Heart left ventricle (tissue), 16 donors: ENCODE measurements at regions of chr3 and their contacts with region 1.

Region 1: DNA sequence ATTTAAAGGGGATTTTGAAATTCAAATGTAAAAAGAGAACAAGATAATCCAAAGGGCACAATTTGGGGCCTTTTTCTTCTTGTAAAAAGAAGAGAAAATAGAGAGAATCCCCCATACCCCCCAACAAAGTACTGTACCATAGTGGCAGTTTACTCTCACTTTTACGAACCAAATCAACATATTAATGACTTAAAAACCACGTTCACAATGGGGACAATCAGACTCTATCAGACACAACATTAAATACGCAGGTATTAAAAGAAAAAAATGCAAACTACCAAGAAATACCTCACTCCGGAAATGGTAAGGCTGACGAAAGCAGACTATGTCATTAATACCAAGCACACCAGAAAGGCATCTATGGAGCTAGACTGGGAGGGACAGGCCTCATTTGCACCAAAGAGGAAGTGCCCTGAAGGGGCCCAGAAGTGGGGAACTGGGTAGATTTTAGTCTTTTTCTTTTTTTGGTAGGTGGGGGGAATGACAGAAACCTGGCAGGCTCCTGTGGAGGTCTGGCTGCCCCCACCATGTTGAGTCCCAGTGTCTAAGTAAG is 134.3 kb downstream of the TIGIT start:
- DNase-seq: no peak
- ATAC-seq: no peak
- H3K4me3 ChIP-seq: no peak overlapping the region
- H3K27ac ChIP-seq: no peak overlapping the region
- H3K4me1 ChIP-seq: peaks cover 0 to 16% (median 7%) of the 10 kb centered on the region in 12 donors
- H3K27me3 ChIP-seq: no peaks in the 10 kb centered on the region
- CTCF ChIP-seq: no peak
- POLR2A ChIP-seq: no peak

Region 2: GRCh38 chr3:114112696-114113095 is 315.4 kb before region 1 on chr3:
- intact Hi-C with region 1: no loop called
- DNase-seq: no peak
- ATAC-seq: peak in 1 of 4 donors; percentile 20
- H3K4me3 ChIP-seq: no peak overlapping the region
- H3K27ac ChIP-seq: no peak overlapping the region
- H3K4me1 ChIP-seq: peaks cover 0 to 24% (median 0%) of the 10 kb centered on the region in 12 donors
- H3K27me3 ChIP-seq: no peaks in the 10 kb centered on the region
- CTCF ChIP-seq: no peak
- POLR2A ChIP-seq: no peak

Region 3: DNA sequence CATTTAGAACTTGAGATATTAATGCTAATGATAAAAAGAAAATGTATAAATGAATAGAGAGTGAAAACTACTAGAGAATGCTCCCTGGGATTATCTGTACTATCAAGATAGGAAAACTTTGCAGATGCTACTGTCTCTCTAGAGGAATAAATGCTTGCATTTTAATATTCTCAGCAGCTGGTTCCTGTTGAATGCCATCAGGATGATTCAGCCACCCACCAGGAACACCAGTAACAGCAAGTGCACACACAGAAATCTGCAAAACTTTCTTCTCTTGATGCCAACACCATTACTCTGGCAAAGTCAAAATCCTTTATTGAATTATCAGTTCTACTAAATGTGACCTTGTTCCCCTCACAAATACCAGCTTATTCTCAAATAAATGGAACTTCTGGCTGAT is 14.1 kb after region 1 on chr3:
- intact Hi-C with region 1: loop called in 1 of 10 experiments (anchors 2 kb)
- DNase-seq: no peak
- ATAC-seq: peak in 2 of 4 donors; percentile 23 to 50
- H3K4me3 ChIP-seq: no peak overlapping the region
- H3K27ac ChIP-seq: no peak overlapping the region
- H3K4me1 ChIP-seq: peaks cover 5 to 78% (median 57%) of the 10 kb centered on the region in 12 donors
- H3K27me3 ChIP-seq: no peaks in the 10 kb centered on the region
- CTCF ChIP-seq: no peak
- POLR2A ChIP-seq: no peak

Region 4: DNA sequence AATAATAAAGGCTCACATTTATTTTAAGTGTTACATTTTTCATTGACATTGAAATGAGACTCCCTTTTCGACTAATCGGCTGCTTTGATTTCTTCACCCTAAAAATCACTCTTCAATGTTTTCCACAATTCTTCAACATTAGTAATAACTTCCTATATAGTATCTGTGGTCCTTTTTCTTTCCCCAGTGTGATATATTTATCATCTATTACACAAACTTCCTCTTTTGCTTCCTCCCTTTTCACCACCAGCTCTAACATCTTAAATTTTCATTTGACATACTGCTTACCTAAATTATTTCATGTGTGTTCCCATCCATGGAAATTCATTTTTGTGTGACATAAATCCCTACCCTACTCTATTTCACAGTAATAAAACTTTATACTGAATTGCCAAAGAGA is 110.1 kb after region 1 on chr3:
- intact Hi-C with region 1: no loop called
- DNase-seq: no peak
- ATAC-seq: no peak
- H3K4me3 ChIP-seq: no peak overlapping the region
- H3K27ac ChIP-seq: no peak overlapping the region
- H3K4me1 ChIP-seq: peaks cover 0 to 14% (median 2%) of the 10 kb centered on the region in 12 donors
- H3K27me3 ChIP-seq: no peaks in the 10 kb centered on the region
- CTCF ChIP-seq: no peak
- POLR2A ChIP-seq: no peak

Region 5: GRCh38 chr3:114597013-114597412 is 168.9 kb after region 1 on chr3:
- intact Hi-C with region 1: loop called in 1 of 10 experiments (anchors 10 kb)
- DNase-seq: no peak
- ATAC-seq: peak in 1 of 4 donors; percentile 30
- H3K4me3 ChIP-seq: no peak overlapping the region
- H3K27ac ChIP-seq: peak overlapping the region in 1 of 12 donors; percentile 28
- H3K4me1 ChIP-seq: peaks cover 0 to 57% (median 22%) of the 10 kb centered on the region in 12 donors
- H3K27me3 ChIP-seq: no peaks in the 10 kb centered on the region
- CTCF ChIP-seq: peak in 3 of 12 donors; percentile 13 to 36 (median 33)
- POLR2A ChIP-seq: no peak